Natural killer cell (primary cell): ENCODE measurements at regions of chr5 and their contacts with region 1.

Region 1: GRCh38 chr5:172833686-172834414 is at the start of gene ERGIC1:
- DNase-seq: peak; percentile 78 to 79
- ATAC-seq: peak; percentile 74 to 89 (median 87)
- H3K4me3 ChIP-seq: peak within 1 kb of the TSS; percentile 67
- H3K4me3 Mint-ChIP-seq: peak within 1 kb of the TSS; percentile 90
- H3K27ac ChIP-seq: peak within 1 kb of the TSS; percentile 90
- H3K27ac Mint-ChIP-seq: peak within 1 kb of the TSS; percentile 95 to 96
- H3K4me1 ChIP-seq: peaks cover 53% of the 10 kb centered on the region
- H3K4me1 Mint-ChIP-seq: peaks cover 37 to 48% of the 10 kb centered on the region in 2 donors
- H3K27me3 ChIP-seq: no peaks in the 10 kb centered on the region
- H3K27me3 Mint-ChIP-seq: no peaks in the 10 kb centered on the region
- CTCF ChIP-seq: no peak
- total RNA-seq, gene ERGIC1: 86.2 to 126 (median 121) TPM

Region 2: DNA sequence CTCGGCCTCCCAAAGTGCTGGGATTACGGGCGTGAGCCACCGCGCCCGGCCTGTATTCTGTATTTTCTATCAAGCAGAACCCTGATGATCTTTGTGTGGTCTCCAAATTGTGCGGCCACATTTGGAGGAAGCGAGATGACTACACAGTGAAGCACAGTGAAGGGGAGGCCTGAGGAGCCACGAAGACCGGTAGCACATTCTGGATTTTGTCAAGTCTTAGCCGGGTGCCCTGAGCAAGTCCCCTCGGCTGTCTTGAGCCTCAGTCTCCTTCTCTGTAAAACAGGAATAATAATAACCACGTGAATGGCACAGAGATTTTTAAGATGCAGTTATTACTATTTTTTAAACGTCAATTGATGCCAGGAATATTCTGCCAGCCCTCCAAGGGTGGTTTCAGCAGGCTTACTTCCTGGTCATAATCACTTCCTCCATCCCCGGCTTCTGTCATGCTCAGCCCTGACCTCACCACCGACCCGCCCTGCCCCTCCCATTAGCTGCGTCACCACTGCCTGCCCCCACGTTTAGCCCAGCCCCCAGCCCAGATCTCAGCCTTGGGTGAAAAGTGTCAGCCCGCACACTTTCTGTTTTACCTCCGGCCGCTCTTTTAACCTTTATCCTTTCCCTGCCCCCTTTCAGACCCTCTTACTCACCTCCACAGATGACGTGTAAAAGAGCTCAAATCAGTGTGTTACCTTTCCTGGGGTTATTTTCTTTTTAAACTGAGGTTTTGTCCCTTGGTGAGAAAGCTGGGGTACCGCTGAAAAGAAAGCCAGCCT is 26.8 kb before region 1 on chr5:
- intact Hi-C with region 1: loop called (anchors 2 kb)
- DNase-seq: peak; percentile 77 to 90
- ATAC-seq: peak; percentile 97 to 99 (median 99)
- H3K4me3 ChIP-seq: peak overlapping the region; percentile 49
- H3K4me3 Mint-ChIP-seq: peak overlapping the region; percentile 80
- H3K27ac ChIP-seq: peak overlapping the region; percentile 91
- H3K27ac Mint-ChIP-seq: peak overlapping the region; percentile 81 to 93
- H3K4me1 ChIP-seq: peaks cover 21% of the 10 kb centered on the region
- H3K4me1 Mint-ChIP-seq: peaks cover 9 to 25% of the 10 kb centered on the region in 2 donors
- H3K27me3 ChIP-seq: no peaks in the 10 kb centered on the region
- H3K27me3 Mint-ChIP-seq: no peaks in the 10 kb centered on the region
- CTCF ChIP-seq: no peak

Region 3: DNA sequence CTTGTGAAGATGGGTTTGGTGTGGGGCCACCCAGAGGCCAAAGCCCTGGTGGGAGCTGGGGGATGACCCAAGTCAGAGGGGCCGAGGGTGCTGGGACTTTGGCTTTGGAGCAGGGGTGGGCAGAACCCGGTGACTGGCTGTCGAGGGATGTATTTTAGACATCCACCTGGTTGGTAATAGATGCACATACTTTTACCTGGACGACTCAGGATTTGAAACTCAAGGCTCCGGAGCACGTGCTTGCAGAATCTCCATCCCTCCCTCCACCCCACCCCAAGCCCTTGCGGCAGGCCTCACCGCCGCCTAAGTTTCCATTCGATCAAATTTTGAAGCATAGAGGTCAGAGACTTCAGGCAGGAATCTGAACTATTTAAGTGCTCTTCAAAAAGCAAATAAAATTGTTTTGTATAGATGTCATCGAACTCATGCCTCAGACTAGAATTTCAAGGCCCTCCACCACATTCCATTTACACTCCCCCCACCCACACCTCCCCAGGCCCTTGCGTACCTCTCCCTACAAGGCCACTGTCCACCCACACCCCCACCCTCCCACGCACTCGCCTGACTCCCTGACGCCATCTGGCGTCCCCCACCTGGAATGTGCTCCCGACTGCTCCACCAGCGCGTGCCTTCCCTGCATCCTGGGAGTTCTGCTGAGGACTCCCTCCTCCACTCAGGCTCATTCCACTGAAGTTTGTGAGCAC is 68.8 kb after region 1 on chr5:
- intact Hi-C with region 1: no loop called
- DNase-seq: peak in 1 of 2 donors; percentile 21
- ATAC-seq: no peak
- H3K4me3 ChIP-seq: no peak overlapping the region
- H3K4me3 Mint-ChIP-seq: no peak overlapping the region
- H3K27ac ChIP-seq: no peak overlapping the region
- H3K27ac Mint-ChIP-seq: peak overlapping the region in 1 of 2 donors; percentile 8
- H3K4me1 ChIP-seq: peaks cover 7% of the 10 kb centered on the region
- H3K4me1 Mint-ChIP-seq: peaks cover 11 to 12% of the 10 kb centered on the region in 2 donors
- H3K27me3 ChIP-seq: no peaks in the 10 kb centered on the region
- H3K27me3 Mint-ChIP-seq: no peaks in the 10 kb centered on the region
- CTCF ChIP-seq: no peak